B cell (primary cell): ENCODE measurements at regions of chr20 and their contacts with region 1.

Region 1: GRCh38 chr20:43666376-43667328 is at the start of gene MYBL2:
- DNase-seq: peak; percentile 89
- ATAC-seq: peak; percentile 78
- H3K4me3 ChIP-seq: peak within 1 kb of the TSS; percentile 48 to 71 (median 66)
- H3K4me3 Mint-ChIP-seq: peak within 1 kb of the TSS; percentile 91
- H3K27ac ChIP-seq: no peak within 1 kb of the TSS
- H3K27ac Mint-ChIP-seq: peak within 1 kb of the TSS; percentile 95
- H3K4me1 ChIP-seq: peaks cover 9 to 58% of the 10 kb centered on the region in 2 donors
- H3K4me1 Mint-ChIP-seq: peaks cover 43% of the 10 kb centered on the region
- H3K27me3 ChIP-seq: peaks cover 0 to 10% (median 0%) of the 10 kb centered on the region in 4 experiments
- H3K27me3 Mint-ChIP-seq: no peaks in the 10 kb centered on the region
- CTCF ChIP-seq: no peak
- total RNA-seq, gene MYBL2: 35.8 and 37.9 TPM in 2 replicates

Region 2: DNA sequence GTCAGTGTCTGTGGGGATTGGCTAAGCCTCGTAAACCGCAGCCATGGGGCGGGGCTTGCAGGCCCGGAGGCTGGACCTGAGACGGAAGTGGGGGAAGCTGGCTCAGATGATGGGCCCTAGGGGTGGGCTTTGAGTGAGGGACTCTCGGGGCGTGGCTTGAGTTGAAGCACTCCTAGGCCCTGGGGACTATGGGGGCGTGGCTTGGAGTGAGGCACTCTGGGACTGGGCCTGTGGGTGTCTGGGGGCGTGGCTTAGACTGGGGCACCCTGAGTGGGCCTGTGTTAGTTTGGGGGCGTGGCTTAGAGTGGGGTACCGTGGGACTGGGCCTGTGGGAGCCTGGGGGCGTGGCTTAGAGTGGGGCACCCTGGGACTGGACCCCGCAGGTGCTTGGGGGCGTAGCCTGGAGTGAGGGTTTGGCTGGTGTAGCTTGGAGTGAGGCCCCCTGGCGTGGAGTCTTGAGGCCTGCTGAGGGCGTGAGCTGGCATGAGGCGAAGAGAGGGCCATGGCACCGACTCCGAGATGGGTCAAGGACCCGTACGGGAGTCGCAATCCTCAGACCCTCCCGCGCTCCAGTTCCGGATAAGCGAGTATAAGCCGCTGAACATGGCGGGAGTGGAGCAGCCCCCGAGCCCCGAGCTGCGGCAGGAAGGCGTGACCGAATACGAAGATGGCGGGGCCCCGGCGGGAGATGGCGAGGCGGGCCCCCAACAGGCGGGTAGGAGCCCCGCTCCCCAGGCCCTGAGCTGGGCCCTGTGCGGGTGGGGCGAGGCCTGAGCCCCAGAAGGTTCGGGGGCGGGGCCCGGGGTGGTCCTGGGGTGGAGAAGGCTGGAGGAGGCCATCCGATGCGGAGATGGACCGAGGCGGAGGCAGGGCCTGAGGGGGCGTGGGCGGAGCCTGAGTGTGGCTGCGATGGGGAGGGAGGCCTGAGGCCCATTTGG is 152.3 kb before region 1 on chr20:
- CTCF ChIA-PET with region 1: no interaction called
- POLR2A ChIA-PET with region 1: no interaction called
- intact Hi-C with region 1: loop called (anchors 1 kb)
- DNase-seq: peak; percentile 95
- ATAC-seq: peak; percentile 88
- H3K4me3 ChIP-seq: peak overlapping the region; percentile 44 to 71 (median 62)
- H3K4me3 Mint-ChIP-seq: peak overlapping the region; percentile 94
- H3K27ac ChIP-seq: peak overlapping the region; percentile 52 to 63
- H3K27ac Mint-ChIP-seq: peak overlapping the region; percentile 94
- H3K4me1 ChIP-seq: peaks cover 9 to 16% of the 10 kb centered on the region in 2 donors
- H3K4me1 Mint-ChIP-seq: peaks cover 24% of the 10 kb centered on the region
- H3K27me3 ChIP-seq: peaks cover 0 to 6% (median 2%) of the 10 kb centered on the region in 4 experiments
- H3K27me3 Mint-ChIP-seq: peaks cover 3% of the 10 kb centered on the region
- CTCF ChIP-seq: peak; percentile 34

Region 3: GRCh38 chr20:43590392-43591323 is 76.0 kb before region 1 on chr20 and contains the start of gene IFT52:
- CTCF ChIA-PET with region 1: no interaction called
- POLR2A ChIA-PET with region 1: interaction called, 9 read pairs
- intact Hi-C with region 1: loop called (anchors 1 kb)
- DNase-seq: peak; percentile 94
- ATAC-seq: peak; percentile 97
- H3K4me3 ChIP-seq: peak within 1 kb of the TSS; percentile 67 to 80 (median 75)
- H3K4me3 Mint-ChIP-seq: peak within 1 kb of the TSS; percentile 93
- H3K27ac ChIP-seq: peak within 1 kb of the TSS; percentile 66 to 92
- H3K27ac Mint-ChIP-seq: peak within 1 kb of the TSS; percentile 95
- H3K4me1 ChIP-seq: peaks cover 9 to 15% of the 10 kb centered on the region in 2 donors
- H3K4me1 Mint-ChIP-seq: peaks cover 18% of the 10 kb centered on the region
- H3K27me3 ChIP-seq: no peaks in the 10 kb centered on the region
- H3K27me3 Mint-ChIP-seq: peaks cover 5% of the 10 kb centered on the region
- CTCF ChIP-seq: no peak
- total RNA-seq, gene IFT52: 16.7 and 23.7 TPM in 2 replicates

Region 4: GRCh38 chr20:43681468-43681942 is 14.9 kb after region 1 on chr20:
- CTCF ChIA-PET with region 1: interaction called, 25 read pairs
- POLR2A ChIA-PET with region 1: interaction called, 67 read pairs
- intact Hi-C with region 1: loop called (anchors 1 kb)
- DNase-seq: peak; percentile 83
- ATAC-seq: peak; percentile 37
- H3K4me3 ChIP-seq: peak overlapping the region; percentile 11 to 68 (median 43)
- H3K4me3 Mint-ChIP-seq: peak overlapping the region; percentile 70
- H3K27ac ChIP-seq: peak overlapping the region; percentile 98 to 99
- H3K27ac Mint-ChIP-seq: peak overlapping the region; percentile 97
- H3K4me1 ChIP-seq: peaks cover 38 to 60% of the 10 kb centered on the region in 2 donors
- H3K4me1 Mint-ChIP-seq: peaks cover 51% of the 10 kb centered on the region
- H3K27me3 ChIP-seq: no peaks in the 10 kb centered on the region
- H3K27me3 Mint-ChIP-seq: no peaks in the 10 kb centered on the region
- CTCF ChIP-seq: peak; percentile 51

Region 5: DNA sequence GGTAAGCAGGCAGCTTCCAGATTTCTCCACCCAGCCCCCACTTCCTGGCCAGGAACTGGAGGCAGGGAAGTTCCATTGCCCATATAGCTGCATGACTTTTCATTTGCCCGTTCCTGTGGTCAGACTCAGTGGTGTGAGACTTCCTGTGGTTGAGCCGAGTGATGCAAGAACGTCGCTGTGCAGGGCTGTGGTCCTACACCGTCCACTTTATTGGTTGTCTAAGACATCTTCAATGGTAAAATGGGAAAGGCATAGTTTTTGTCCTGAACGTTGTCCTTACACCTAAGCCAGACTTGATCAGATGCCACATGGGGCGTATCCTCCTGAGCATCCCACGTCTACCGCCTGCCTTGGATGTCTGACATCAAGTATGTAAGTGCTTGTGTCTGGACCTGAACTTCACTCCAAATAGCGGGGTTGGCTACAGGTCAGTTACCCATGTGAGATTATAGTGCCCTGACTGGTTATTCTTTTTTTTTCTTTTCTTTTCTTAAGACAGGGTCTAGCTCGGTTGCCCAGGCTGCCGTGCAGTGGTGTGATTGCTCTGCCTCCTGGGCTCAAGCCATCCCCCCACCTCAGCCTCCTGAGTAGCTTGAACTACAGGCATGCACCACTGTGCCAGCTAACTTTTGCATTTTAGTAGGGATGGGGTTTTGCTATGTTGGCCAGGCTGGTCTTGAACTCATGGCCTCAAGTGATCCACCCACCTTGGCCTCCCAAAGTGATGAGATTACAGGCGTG is 86.1 kb after region 1 on chr20:
- CTCF ChIA-PET with region 1: no interaction called
- POLR2A ChIA-PET with region 1: no interaction called
- intact Hi-C with region 1: no loop called
- DNase-seq: peak; percentile 30
- ATAC-seq: peak; percentile 12
- H3K4me3 ChIP-seq: no peak overlapping the region
- H3K4me3 Mint-ChIP-seq: peak overlapping the region; percentile 34
- H3K27ac ChIP-seq: no peak overlapping the region
- H3K27ac Mint-ChIP-seq: peak overlapping the region; percentile 3
- H3K4me1 ChIP-seq: peaks cover 28 to 33% of the 10 kb centered on the region in 2 donors
- H3K4me1 Mint-ChIP-seq: peaks cover 33% of the 10 kb centered on the region
- H3K27me3 ChIP-seq: no peaks in the 10 kb centered on the region
- H3K27me3 Mint-ChIP-seq: no peaks in the 10 kb centered on the region
- CTCF ChIP-seq: no peak

Region 6: DNA sequence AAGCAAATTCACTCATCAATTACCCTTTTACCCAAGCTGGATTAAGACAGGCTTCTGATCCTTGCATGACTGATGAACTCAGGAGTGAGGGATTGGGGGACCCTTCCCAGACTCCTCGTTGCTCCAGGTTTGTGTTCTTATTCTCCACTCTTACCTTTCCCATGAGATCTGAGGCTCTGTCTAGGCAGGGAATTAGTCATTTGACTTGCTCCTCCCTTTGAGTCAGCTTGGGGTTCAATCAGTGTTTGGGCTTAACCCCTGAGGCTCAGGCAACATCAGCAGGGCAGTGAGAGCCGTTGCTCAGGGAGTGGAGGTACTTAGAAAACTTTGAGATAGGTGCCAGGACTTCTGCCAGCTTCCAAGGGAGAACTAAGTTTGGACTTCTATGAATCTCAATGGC is 227.3 kb after region 1 on chr20:
- CTCF ChIA-PET with region 1: no interaction called
- POLR2A ChIA-PET with region 1: no interaction called
- intact Hi-C with region 1: no loop called
- DNase-seq: no peak
- ATAC-seq: no peak
- H3K4me3 ChIP-seq: no peak overlapping the region
- H3K4me3 Mint-ChIP-seq: no peak overlapping the region
- H3K27ac ChIP-seq: no peak overlapping the region
- H3K27ac Mint-ChIP-seq: no peak overlapping the region
- H3K4me1 ChIP-seq: no peaks in the 10 kb centered on the region
- H3K4me1 Mint-ChIP-seq: no peaks in the 10 kb centered on the region
- H3K27me3 ChIP-seq: peaks cover 0 to 8% (median 1%) of the 10 kb centered on the region in 4 experiments
- H3K27me3 Mint-ChIP-seq: peaks cover 43% of the 10 kb centered on the region
- CTCF ChIP-seq: no peak